ENCODE measurements at regions of chr18 and their contacts with region 1.

Region 1: DNA sequence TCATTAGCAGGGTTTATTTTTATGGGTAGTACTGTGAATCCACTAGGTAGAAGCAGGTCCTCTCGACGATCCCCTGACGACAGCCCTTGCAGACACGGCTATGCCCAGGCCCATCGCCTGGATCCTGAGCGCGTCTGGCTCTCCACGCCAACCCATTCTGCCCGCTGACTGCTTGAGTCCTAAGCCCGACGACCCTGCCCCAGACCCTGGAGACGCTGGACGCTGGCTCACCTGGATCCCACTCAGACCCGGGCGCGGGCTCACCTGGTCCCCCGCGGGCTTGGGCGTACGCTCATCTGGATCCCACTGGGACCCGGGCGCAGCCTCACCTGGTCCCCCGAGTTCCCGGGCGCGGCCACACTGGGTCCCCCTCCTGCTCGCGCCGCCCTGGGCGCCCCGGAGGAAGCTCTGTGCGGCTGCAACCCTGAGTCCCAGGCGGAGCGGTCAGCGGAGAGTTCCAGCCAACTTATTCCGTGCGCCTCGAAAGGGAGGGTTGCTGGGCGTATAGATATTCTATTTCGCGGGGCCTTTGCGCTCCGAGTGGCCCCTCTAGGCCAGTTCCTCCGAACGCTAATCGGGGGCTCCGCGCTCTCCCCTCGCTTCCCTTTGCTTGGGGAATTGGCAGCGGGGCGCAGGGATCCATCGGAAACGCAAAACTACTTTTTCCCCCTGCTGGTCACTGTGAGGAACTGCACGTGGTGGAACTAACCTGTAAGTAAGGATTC is 22.4 kb upstream of the RMP24 start:
- DNase-seq: peak; percentile 79
- H3K4me3 ChIP-seq: peak overlapping the region; percentile 56 to 80
- H3K27ac ChIP-seq: no peak overlapping the region
- H3K4me1 ChIP-seq: peaks cover 0 to 7% of the 10 kb centered on the region in 2 experiments; a peak in 1 of 4 replicates
- H3K27me3 ChIP-seq: no peaks in the 10 kb centered on the region
- CTCF ChIP-seq: peak; percentile 93
- EP300 ChIP-seq: no peak
- RAD21 ChIP-seq: peak; percentile 71

Region 2: DNA sequence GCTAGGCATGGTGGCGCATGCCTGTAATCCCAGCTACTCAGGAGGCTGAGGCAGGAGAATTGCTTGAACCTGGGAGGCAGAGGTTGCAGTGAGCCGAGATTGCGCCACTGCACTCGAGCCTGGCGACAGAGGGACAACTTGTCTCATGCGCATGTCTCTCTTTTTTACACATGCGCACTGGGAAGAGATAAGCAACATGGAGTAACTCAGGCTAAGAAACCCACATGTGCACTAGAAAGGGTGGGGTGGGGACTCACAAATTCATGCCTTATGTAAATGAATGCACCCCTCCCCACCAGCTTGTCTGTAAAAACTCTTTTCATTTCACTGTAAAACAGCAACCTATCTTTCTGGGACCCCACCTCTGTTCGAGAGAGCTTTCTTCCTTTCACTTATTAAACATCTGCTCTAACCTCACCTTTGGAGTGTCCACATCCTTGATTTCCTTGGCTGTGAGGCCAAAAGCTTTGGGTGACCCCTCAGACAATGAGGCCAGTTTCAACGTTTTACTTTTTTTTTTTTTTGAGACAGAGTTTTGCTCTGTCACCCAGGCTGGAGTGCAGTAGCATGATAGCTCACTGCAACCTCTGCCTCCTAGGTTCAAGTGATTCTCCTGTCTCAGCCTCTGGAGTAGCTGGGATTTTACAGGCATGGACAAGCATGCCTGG is 69.1 kb before region 1 on chr18:
- CTCF ChIA-PET with region 1: interaction called, 10 read pairs
- POLR2A ChIA-PET with region 1: no interaction called
- DNase-seq: no peak
- H3K4me3 ChIP-seq: no peak overlapping the region
- H3K27ac ChIP-seq: no peak overlapping the region
- H3K4me1 ChIP-seq: no peaks in the 10 kb centered on the region
- H3K27me3 ChIP-seq: no peaks in the 10 kb centered on the region
- CTCF ChIP-seq: no peak
- EP300 ChIP-seq: no peak
- RAD21 ChIP-seq: no peak

Region 3: DNA sequence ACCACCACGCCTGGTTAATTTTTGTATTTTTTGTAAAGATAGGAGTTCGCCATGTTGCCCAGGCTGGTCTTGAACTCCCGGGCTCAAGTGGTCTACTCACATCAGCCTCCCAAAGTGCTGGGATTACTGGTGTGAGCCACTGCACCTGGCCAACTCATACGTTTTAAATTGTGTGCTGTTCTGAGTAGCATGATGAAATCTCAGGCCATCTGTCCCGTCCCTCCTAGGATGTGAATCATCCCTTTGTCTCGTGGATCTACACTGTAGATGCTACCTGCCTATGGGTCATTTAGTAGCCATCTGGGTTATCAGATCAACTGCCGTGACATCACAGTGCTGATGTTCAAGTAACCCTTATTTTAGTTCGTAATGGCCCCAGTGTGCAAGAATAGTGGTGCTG is 16.1 kb before region 1 on chr18:
- CTCF ChIA-PET with region 1: interaction called, 34 read pairs
- POLR2A ChIA-PET with region 1: no interaction called
- DNase-seq: no peak
- H3K4me3 ChIP-seq: no peak overlapping the region
- H3K27ac ChIP-seq: no peak overlapping the region
- H3K4me1 ChIP-seq: no peaks in the 10 kb centered on the region
- H3K27me3 ChIP-seq: no peaks in the 10 kb centered on the region
- CTCF ChIP-seq: no peak
- EP300 ChIP-seq: no peak
- RAD21 ChIP-seq: no peak

Region 4: DNA sequence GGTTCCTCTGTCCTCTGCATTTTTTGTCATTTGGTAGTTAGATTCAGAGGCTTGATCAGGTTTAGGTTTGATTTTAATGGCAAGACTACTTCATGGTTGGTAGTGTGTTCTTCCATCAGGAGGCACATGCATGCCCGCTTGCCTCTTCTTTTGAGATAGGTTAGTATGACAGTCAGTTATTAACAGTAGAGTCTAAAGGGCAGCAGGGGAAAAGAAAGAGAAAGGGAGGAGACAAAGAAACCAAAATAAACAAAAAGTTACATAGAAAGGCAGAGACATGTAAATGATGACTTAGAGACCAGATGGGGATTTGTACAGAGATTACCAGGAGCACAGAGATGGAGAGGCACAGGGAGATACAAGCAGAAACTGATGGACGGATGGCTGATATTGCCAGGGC is 12.3 kb after region 1 on chr18:
- CTCF ChIA-PET with region 1: interaction called, 15 read pairs
- POLR2A ChIA-PET with region 1: no interaction called
- DNase-seq: no peak
- H3K4me3 ChIP-seq: no peak overlapping the region
- H3K27ac ChIP-seq: no peak overlapping the region
- H3K4me1 ChIP-seq: no peaks in the 10 kb centered on the region
- H3K27me3 ChIP-seq: no peaks in the 10 kb centered on the region; the same call in 1 of the 2 replicates
- CTCF ChIP-seq: no peak
- EP300 ChIP-seq: no peak
- RAD21 ChIP-seq: no peak

Measured in SK-N-SH (cell line).